Heart right ventricle (tissue), 16 donors: ENCODE measurements at regions of chr22 and their contacts with region 1.

Region 1: GRCh38 chr22:29683536-29683935 is 36.3 kb upstream of the CABP7 start:
- DNase-seq: no peak
- ATAC-seq: no peak
- H3K4me3 ChIP-seq: no peak overlapping the region
- H3K27ac ChIP-seq: no peak overlapping the region
- H3K4me1 ChIP-seq: peaks cover 0 to 7% (median 0%) of the 10 kb centered on the region in 9 donors
- H3K27me3 ChIP-seq: no peaks in the 10 kb centered on the region
- CTCF ChIP-seq: no peak

Region 2: GRCh38 chr22:30015846-30016245 is 332.3 kb after region 1 on chr22:
- intact Hi-C with region 1: loop called in 1 of 10 experiments (anchors 5 kb)
- DNase-seq: no peak
- ATAC-seq: no peak
- H3K4me3 ChIP-seq: no peak overlapping the region
- H3K27ac ChIP-seq: no peak overlapping the region
- H3K4me1 ChIP-seq: no peaks in the 10 kb centered on the region
- H3K27me3 ChIP-seq: no peaks in the 10 kb centered on the region
- CTCF ChIP-seq: no peak